HEK293 (cell line): ENCODE measurements at regions of chr12 and their contacts with region 1.

Region 1: DNA sequence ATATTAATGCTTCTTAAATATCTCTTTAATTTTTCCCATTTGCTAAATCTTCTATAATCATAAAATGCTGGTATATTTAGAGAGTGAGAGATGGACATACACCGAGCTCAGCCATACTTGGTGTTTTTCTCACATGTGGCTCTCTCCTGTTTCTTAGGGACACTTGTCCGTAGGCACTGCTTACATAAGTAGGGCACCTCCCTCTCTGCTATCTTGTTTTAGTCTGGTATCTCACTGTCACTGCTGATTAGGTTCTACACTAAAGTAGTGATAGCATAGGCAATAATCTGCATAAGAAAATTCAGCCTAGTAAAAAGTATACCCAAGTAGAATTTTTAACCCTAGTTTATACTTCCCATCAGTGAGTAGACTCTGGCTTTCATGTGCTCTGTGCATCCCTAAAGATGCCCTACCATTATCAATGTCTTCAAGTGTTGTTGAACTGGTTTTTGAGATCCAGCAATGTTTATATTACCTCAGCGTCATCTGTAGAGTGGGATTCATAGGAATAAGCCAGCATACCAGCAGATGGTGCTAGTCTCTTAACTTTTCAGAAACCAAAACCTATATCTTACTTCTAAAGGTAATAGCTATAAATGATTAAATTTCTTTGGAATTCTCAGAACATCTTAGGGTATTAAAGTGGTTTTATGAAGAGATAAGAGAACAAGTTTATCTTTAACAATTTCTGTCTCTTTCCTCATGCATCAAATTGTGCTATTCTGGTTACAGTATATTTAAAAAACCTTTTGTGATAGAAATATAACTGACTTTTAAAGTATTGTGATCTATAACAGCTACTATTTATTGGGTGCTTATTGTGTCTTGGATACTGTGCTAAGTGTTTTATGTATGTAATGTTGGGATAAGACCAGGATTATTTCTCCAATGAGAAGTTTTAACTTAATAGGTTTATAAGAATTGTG is 32.9 kb downstream of the ARID2 start:
- H3K4me3 ChIP-seq: no peak overlapping the region
- H3K27ac ChIP-seq: no peak overlapping the region
- H3K4me1 ChIP-seq: peaks cover 5% of the 10 kb centered on the region
- CTCF ChIP-seq: peak; percentile 52

Region 2: DNA sequence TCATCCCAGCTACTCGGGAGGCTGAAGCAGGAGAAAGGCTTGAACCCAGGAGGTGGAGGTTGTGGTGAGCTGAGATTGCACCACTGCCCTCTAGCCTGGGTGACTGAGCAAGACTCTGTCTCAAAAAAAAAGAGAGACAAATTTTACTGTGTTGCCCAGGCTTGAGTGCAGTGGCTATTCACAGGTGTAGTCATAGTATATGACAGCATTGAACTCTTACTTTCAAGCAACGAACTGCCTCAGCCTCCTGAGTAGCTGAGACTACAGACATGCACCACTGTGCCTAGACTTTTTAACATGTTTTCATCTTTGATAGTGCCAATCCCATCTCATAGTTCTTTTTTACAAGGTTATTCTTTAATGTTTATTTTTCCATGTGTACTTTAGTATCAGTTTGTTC is 19.2 kb before region 1 on chr12:
- CTCF ChIA-PET with region 1: interaction called, 17 read pairs
- POLR2A ChIA-PET with region 1: interaction called, 3 read pairs
- H3K4me3 ChIP-seq: no peak overlapping the region
- H3K27ac ChIP-seq: no peak overlapping the region
- H3K4me1 ChIP-seq: no peaks in the 10 kb centered on the region
- CTCF ChIP-seq: no peak